ENCODE measurements at regions of chr10 and their contacts with region 1.

Region 1: GRCh38 chr10:119080521-119081260 is at the start of gene EIF3A:
- DNase-seq: peak; percentile 82
- ATAC-seq: peak; percentile 91
- H3K4me3 ChIP-seq: peak within 1 kb of the TSS; percentile 79 to 99 (median 90)
- H3K27ac ChIP-seq: peak within 1 kb of the TSS; percentile 94
- H3K4me1 ChIP-seq: peaks cover 53% of the 10 kb centered on the region
- H3K27me3 ChIP-seq: no peaks in the 10 kb centered on the region; a peak in 1 of 5 replicates
- CTCF ChIP-seq: peak; percentile 5; the same call in 1 of the 2 replicates
- EP300 ChIP-seq: no peak
- POLR2A ChIP-seq: peak; percentile 93 to 99
- RAD21 ChIP-seq: no peak
- total RNA-seq, gene EIF3A: 117 and 168 TPM in 2 replicates

Region 2: DNA sequence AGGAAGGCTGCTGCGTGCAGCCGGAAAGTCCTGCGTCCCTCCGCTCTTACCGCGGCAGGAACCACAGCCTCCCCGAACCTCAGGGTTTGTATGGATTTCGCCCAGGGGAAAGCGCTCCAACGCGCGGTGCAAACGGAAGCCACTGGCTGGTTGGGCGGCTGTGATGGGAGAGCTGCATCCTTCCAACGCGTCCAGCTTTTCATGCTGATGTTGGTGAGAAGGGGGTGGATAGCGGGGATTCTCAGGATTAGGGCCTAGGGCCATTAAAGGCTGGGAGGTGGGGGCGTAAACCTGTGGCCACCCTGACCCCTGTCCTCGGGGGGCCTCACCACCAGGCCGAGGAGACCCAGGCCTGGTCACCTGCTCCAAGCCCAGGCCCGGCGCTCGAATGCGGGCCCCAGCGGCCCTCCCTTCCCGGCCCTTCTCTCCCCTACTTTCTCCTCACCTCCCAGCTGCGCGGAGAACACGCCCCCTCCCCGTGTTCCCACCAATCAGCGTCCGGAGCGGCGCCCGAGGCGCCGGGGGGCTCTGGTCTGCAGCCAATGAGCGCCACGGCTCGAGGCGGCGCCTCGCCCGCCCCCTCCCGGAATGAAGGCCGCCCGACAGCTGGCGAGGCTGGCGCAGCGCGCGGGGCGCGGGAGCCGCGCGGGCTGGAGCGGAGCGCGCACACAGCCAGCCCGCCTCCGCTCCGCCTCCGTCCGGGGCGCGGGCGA is 51.6 kb before region 1 on chr10:
- CTCF ChIA-PET with region 1: no interaction called
- POLR2A ChIA-PET with region 1: interaction called, 3 read pairs
- in situ Hi-C with region 1: loop called (anchors 5 kb)
- intact Hi-C with region 1: loop called (anchors 5 kb)
- DNase-seq: peak; percentile 84
- ATAC-seq: peak; percentile 82
- H3K4me3 ChIP-seq: peak overlapping the region; percentile 49 to 77 (median 64)
- H3K27ac ChIP-seq: no peak overlapping the region
- H3K4me1 ChIP-seq: peaks cover 60% of the 10 kb centered on the region
- H3K27me3 ChIP-seq: peaks cover 3 to 27% of the 10 kb centered on the region in 2 experiments; a peak in 2 of 5 replicates
- CTCF ChIP-seq: no peak
- EP300 ChIP-seq: no peak
- POLR2A ChIP-seq: no peak; a peak in 1 of 4 replicates
- RAD21 ChIP-seq: no peak; the same call in 1 of the 2 replicates

Region 3: GRCh38 chr10:119103903-119104652 is 23.4 kb after region 1 on chr10 and contains the start of gene DENND10:
- CTCF ChIA-PET with region 1: no interaction called
- POLR2A ChIA-PET with region 1: interaction called, 26 read pairs
- in situ Hi-C with region 1: no loop called
- intact Hi-C with region 1: no loop called
- DNase-seq: no peak
- ATAC-seq: peak; percentile 86
- H3K4me3 ChIP-seq: peak within 1 kb of the TSS; percentile 70 to 92 (median 83)
- H3K27ac ChIP-seq: peak within 1 kb of the TSS; percentile 63
- H3K4me1 ChIP-seq: peaks cover 56% of the 10 kb centered on the region
- H3K27me3 ChIP-seq: no peaks in the 10 kb centered on the region
- CTCF ChIP-seq: no peak
- EP300 ChIP-seq: no peak
- POLR2A ChIP-seq: peak; percentile 87 to 98
- RAD21 ChIP-seq: peak; percentile 50; the same call in 1 of the 2 replicates
- total RNA-seq, gene DENND10: 43.7 and 55.1 TPM in 2 replicates

Region 4: GRCh38 chr10:119178372-119179119 is 97.9 kb after region 1 on chr10 and contains the start of gene PRDX3:
- CTCF ChIA-PET with region 1: no interaction called
- POLR2A ChIA-PET with region 1: no interaction called
- in situ Hi-C with region 1: no loop called
- intact Hi-C with region 1: loop called (anchors 10 kb)
- DNase-seq: peak; percentile 85
- ATAC-seq: peak; percentile 90
- H3K4me3 ChIP-seq: peak within 1 kb of the TSS; percentile 75 to 94 (median 81)
- H3K27ac ChIP-seq: peak within 1 kb of the TSS; percentile 93
- H3K4me1 ChIP-seq: peaks cover 52% of the 10 kb centered on the region
- H3K27me3 ChIP-seq: no peaks in the 10 kb centered on the region; a peak in 1 of 5 replicates
- CTCF ChIP-seq: peak; percentile 44
- EP300 ChIP-seq: no peak
- POLR2A ChIP-seq: peak; percentile 89 to 95
- RAD21 ChIP-seq: no peak
- total RNA-seq, gene PRDX3: 407 and 643 TPM in 2 replicates

Measured in HepG2 (cell line).